ENCODE measurements at regions of chr2 and their contacts with region 1.

Region 1: DNA sequence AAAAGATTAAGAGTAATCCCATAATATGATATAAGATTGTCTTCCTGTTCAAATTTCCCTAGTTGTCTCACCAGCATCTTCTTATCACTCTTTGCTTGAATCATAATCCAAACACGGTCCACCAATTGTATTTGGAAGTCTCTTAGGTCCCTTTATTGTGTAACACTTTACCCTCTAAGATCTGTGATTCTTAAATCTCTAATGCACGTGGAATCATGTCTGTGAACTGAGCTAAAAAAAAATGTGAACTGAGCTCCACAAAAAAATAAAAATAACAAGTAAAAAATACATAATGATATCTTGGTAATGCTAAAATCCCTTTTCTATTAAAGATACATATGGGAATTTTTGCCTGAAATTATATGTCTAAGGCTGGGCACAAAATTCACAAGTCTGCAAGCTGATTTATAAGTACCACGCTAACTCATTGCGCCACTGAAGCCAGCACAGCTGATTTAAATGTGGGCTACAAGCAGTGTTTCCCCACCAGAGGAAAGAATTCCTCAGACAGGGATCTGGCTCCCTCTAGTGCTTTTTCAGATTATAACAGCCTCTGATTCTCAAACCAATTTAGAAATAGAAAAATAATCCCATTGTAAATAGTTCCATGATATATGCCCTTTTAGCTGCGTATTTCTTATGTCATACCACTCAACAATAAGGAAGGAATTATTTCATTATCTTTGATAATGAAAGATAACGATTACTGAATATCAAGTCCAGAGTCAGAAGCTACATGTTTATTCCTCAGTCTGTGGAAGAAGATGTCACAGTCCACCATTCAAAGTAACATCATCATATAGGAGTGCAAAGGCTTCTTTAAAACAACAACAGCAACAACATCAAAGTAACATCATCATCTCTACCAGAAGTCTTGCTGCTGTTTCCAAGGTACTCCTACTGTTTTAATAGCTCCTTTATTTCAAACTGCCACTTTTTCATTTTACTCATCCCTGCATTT is 22.9 kb downstream of the RBM43 start:
- DNase-seq: peak; percentile 59
- ATAC-seq: peak; percentile 73
- H3K4me3 ChIP-seq: no peak overlapping the region
- H3K4me3 Mint-ChIP-seq: no peak overlapping the region
- H3K27ac ChIP-seq: no peak overlapping the region
- H3K27ac Mint-ChIP-seq: no peak overlapping the region
- H3K4me1 ChIP-seq: no peaks in the 10 kb centered on the region
- H3K4me1 Mint-ChIP-seq: no peaks in the 10 kb centered on the region
- H3K27me3 ChIP-seq: peaks cover 0 to 4% (median 1%) of the 10 kb centered on the region in 4 experiments
- H3K27me3 Mint-ChIP-seq: peaks cover 13% of the 10 kb centered on the region
- CTCF ChIP-seq: peak; percentile 85

Region 2: DNA sequence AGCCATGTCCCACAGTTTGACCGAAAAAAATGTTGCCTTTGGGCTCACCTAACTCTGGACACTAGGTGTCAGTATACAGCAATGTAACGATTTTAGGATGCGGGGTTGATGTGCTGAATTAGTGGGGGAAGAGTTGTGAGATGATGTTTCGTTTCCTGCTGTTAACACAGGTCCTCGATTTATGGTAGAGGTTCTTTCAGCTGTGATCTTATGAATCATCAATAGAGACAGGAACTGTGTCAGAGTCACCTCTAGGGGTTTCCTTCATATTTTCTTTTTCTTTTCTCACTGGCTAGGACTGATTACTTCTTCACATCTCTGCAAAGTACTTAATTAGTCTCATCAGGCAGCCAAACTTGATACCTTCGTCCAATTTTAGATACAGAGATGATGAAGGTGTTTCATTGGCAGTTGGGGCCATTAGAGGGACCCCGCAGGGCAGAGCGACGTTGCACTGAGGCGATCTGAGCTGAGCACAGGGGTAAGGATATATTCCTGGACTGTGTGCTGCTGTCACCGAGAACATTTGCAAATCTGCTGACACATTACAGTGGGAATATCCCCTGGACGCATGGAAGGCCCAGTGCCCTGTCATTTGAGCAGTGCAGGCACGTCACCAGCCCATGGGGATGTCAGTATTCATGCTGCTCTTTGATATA is 1641.0 kb before region 1 on chr2:
- CTCF ChIA-PET with region 1: interaction called, 74 read pairs
- POLR2A ChIA-PET with region 1: interaction called, 4 read pairs
- intact Hi-C with region 1: loop called (anchors 1 kb)
- DNase-seq: peak; percentile 77
- ATAC-seq: peak; percentile 95
- H3K4me3 ChIP-seq: no peak overlapping the region
- H3K4me3 Mint-ChIP-seq: peak overlapping the region; percentile 24
- H3K27ac ChIP-seq: no peak overlapping the region
- H3K27ac Mint-ChIP-seq: no peak overlapping the region
- H3K4me1 ChIP-seq: peaks cover 4 to 5% of the 10 kb centered on the region in 2 donors
- H3K4me1 Mint-ChIP-seq: peaks cover 6% of the 10 kb centered on the region
- H3K27me3 ChIP-seq: peaks cover 0 to 5% (median 2%) of the 10 kb centered on the region in 4 experiments
- H3K27me3 Mint-ChIP-seq: peaks cover 22% of the 10 kb centered on the region
- CTCF ChIP-seq: peak; percentile 87

Region 3: DNA sequence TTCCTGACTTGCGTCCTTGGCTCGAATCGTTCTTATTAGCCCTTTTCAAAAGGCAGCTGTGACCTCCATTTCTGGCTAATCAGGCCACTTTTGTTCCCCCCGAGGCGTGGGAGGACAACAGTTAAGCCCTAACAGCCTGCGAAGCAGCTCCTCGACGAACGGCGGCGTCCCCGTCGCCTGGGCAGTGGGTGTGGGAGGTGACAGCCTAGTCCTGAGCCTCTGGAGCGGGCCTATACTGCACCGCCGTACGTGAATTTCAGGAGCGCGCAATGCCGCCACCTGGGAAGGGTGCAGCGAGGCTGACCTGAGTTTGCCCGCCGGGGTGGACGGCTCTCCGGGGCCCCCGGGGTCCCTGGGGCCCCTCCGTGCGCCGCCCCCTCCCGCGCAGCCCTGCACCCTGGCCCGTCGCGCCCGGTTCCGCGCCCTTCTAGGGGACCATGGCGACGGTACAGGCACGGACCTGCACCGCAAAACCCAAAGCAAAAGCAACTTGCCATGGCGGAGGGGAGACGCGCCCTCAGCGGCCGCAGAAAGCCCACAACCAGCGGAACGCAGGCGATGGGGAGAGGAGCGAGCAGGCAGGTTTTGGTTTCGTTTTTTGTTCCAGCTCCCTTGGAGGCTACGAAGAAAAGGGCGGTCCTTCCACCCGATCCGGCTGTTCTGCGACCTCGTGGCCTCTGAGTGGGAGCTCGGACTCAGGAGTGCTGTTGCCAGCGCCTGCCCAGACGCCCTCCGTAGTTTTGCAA is 22.6 kb after region 1 on chr2 and contains the start of gene RBM43:
- CTCF ChIA-PET with region 1: interaction called, 11 read pairs
- POLR2A ChIA-PET with region 1: no interaction called
- intact Hi-C with region 1: no loop called
- DNase-seq: peak; percentile 86
- ATAC-seq: peak; percentile 84
- H3K4me3 ChIP-seq: peak within 1 kb of the TSS; percentile 78 to 96 (median 85)
- H3K4me3 Mint-ChIP-seq: peak within 1 kb of the TSS; percentile 94
- H3K27ac ChIP-seq: peak within 1 kb of the TSS; percentile 88 to 91
- H3K27ac Mint-ChIP-seq: peak within 1 kb of the TSS; percentile 87
- H3K4me1 ChIP-seq: peaks cover 11 to 12% of the 10 kb centered on the region in 2 donors
- H3K4me1 Mint-ChIP-seq: peaks cover 23% of the 10 kb centered on the region
- H3K27me3 ChIP-seq: no peaks in the 10 kb centered on the region
- H3K27me3 Mint-ChIP-seq: no peaks in the 10 kb centered on the region
- CTCF ChIP-seq: no peak
- total RNA-seq, gene RBM43: 8.4 and 9.0 TPM in 2 replicates

Region 4: DNA sequence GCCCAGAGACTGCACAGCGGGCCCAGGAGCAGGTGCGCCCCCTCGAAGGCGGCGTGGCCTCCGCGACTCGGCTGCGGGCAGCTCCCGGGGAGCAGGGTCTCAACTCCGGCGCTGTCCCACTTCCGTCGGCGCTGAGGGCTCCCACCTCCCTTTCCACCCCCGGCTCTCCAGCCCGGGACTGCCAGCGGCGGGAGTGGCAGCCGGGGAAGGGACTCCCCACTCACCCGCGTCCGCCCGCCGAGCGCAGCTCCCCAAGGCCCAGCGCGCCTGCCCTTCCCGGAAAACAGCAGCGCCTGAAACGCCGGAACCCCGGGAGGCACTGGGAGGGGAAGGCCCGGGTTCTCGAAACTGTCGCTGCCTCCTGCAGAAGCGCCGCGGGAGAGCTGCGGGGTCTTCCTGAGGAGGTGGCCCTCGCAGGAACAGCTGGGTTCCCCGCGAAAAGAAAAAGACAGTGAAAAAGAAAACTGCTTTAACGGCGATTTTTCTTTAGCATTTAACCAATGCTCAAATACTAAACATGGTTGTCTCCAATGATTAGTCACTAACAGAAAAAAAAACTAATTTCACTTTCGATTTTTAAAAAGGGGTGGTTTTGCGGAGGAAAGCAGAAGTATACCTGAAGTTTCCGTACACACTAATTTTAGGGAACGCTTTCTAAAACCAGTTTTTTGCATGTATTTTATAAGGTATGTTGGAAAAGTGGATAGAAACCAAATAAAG is 50.7 kb after region 1 on chr2 and contains the start of gene NMI:
- CTCF ChIA-PET with region 1: interaction called, 13 read pairs
- POLR2A ChIA-PET with region 1: no interaction called
- intact Hi-C with region 1: no loop called
- DNase-seq: peak; percentile 85
- ATAC-seq: peak; percentile 76
- H3K4me3 ChIP-seq: peak within 1 kb of the TSS; percentile 75 to 97 (median 92)
- H3K4me3 Mint-ChIP-seq: peak within 1 kb of the TSS; percentile 94
- H3K27ac ChIP-seq: peak within 1 kb of the TSS; percentile 95 to 97
- H3K27ac Mint-ChIP-seq: peak within 1 kb of the TSS; percentile 97
- H3K4me1 ChIP-seq: peaks cover 27 to 31% of the 10 kb centered on the region in 2 donors
- H3K4me1 Mint-ChIP-seq: peaks cover 39% of the 10 kb centered on the region
- H3K27me3 ChIP-seq: no peaks in the 10 kb centered on the region
- H3K27me3 Mint-ChIP-seq: no peaks in the 10 kb centered on the region
- CTCF ChIP-seq: no peak
- total RNA-seq, gene NMI: 28.5 and 34.0 TPM in 2 replicates

Measured in B cell (primary cell).